Activated CD8-positive, alpha-beta T cell treated with anti-CD3 and anti-CD28 coated beads for 36 hours (primary cell): ENCODE measurements at regions of chr9 and their contacts with region 1.

Region 1: GRCh38 chr9:20622330-20623020 is at the start of gene MLLT3:
- DNase-seq: peak; percentile 97
- ATAC-seq: peak; percentile 87
- H3K4me3 Mint-ChIP-seq: peak within 1 kb of the TSS; percentile 97
- H3K27ac Mint-ChIP-seq: peak within 1 kb of the TSS; percentile 99
- H3K4me1 Mint-ChIP-seq: peaks cover 37% of the 10 kb centered on the region
- H3K27me3 Mint-ChIP-seq: no peaks in the 10 kb centered on the region
- CTCF ChIP-seq: no peak
- total RNA-seq, gene MLLT3: 59.1 to 60.8 TPM

Region 2: GRCh38 chr9:19925817-19926503 is 696.5 kb before region 1 on chr9:
- CTCF ChIA-PET with region 1: interaction called, 3 read pairs
- POLR2A ChIA-PET with region 1: interaction called, 3 read pairs
- intact Hi-C with region 1: loop called (anchors 5 kb)
- DNase-seq: peak; percentile 84
- ATAC-seq: peak; percentile 99
- H3K4me3 Mint-ChIP-seq: peak overlapping the region; percentile 58
- H3K27ac Mint-ChIP-seq: no peak overlapping the region
- H3K4me1 Mint-ChIP-seq: peaks cover 10% of the 10 kb centered on the region
- H3K27me3 Mint-ChIP-seq: peaks cover 13% of the 10 kb centered on the region
- CTCF ChIP-seq: peak; percentile 95

Region 3: DNA sequence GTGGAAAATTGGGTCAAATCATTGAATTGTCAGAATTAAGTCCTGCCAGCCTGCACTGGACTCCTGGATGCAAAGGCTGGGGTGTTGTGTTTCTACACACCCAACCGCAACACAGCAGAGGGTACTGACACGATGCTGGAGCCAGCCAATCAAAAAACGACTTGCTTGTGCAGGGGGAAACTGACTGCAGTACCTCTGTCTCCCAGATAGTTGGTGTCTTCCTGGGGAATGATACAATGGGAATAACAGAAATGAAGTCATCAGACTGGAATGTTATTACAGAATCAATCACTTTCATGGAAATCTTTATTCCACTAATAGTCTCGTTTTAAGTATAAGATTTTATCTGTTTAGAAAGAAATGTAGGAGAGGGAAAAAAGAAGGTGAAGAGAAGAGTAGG is 330.5 kb before region 1 on chr9:
- CTCF ChIA-PET with region 1: no interaction called
- POLR2A ChIA-PET with region 1: no interaction called
- intact Hi-C with region 1: no loop called
- DNase-seq: no peak
- ATAC-seq: no peak
- H3K4me3 Mint-ChIP-seq: no peak overlapping the region
- H3K27ac Mint-ChIP-seq: no peak overlapping the region
- H3K4me1 Mint-ChIP-seq: no peaks in the 10 kb centered on the region
- H3K27me3 Mint-ChIP-seq: no peaks in the 10 kb centered on the region
- CTCF ChIP-seq: no peak

Region 4: DNA sequence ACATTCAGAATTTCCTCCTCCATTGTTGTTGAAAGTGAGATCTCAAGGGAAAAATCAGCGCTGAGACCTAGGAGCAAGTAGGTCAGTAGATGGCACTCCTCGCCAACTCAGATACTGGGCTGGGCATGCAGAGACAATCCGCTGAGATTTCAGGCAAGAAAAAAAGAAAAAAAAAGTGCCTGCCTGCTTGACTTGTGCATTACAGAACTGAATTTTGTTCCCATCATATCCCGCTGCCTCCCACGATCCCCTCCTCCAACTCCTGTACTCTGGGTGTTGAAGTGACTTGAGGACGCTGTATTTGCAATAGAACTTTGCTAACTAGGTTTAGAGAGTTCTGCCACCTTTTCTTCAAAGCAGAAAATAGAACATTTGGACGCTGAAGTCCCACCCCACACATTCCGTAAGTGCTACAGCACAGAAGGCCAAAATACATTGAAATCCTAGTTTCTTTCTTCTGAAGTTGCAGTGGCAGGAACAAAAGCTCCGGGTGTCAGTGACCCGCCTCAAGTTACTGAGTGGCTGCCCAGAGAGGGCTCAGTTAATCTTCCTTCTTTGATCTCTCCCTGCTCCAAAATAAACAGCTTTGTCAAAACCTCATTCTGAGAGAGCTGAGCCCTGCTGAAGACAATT is 266.0 kb before region 1 on chr9:
- CTCF ChIA-PET with region 1: interaction called, 14 read pairs
- POLR2A ChIA-PET with region 1: interaction called, 4 read pairs
- intact Hi-C with region 1: loop called (anchors 2 kb)
- DNase-seq: peak; percentile 72
- ATAC-seq: peak; percentile 50
- H3K4me3 Mint-ChIP-seq: no peak overlapping the region
- H3K27ac Mint-ChIP-seq: no peak overlapping the region
- H3K4me1 Mint-ChIP-seq: peaks cover 68% of the 10 kb centered on the region
- H3K27me3 Mint-ChIP-seq: no peaks in the 10 kb centered on the region
- CTCF ChIP-seq: peak; percentile 53

Region 5: DNA sequence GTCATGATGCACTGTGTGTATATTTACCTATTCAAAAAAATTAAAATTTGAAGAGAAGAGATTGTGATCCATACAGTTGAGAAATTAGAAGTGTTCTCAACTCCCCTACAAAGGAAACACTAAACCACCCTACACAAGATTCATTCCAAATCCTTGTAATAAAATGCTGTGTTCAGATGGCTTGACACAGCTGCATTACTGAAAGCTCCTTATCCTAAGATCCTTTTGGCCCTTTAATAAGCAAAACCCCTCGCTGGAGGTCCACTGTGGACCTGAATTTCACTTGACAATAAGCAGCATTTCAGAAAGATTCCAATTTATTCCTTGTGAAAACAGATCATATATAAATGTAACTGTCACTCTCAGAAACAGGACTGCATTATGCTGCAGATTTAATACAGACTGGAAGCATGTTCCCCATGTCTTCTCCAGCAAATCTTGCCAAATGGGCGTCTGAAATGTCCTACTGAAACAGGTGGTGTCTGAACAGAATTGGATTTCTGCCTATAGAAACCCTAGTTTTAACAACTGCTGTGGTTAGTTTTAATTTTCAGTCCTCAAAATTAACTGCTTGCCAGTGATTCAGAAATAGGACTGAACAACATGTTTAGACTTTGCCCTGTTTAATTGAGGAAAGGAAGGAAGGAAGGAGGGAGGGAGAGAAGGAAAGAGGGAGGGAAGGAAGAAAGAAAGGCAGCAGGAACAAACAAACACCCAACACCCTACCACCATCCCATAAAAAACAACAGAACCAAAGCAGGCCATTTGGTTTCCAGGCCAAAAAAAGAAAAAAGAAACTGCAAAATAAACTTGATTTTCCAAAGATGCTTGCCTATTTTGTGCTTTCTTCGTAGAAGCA is 179.8 kb before region 1 on chr9:
- CTCF ChIA-PET with region 1: no interaction called
- POLR2A ChIA-PET with region 1: no interaction called
- intact Hi-C with region 1: no loop called
- DNase-seq: no peak
- ATAC-seq: no peak
- H3K4me3 Mint-ChIP-seq: no peak overlapping the region
- H3K27ac Mint-ChIP-seq: no peak overlapping the region
- H3K4me1 Mint-ChIP-seq: peaks cover 53% of the 10 kb centered on the region
- H3K27me3 Mint-ChIP-seq: no peaks in the 10 kb centered on the region
- CTCF ChIP-seq: no peak

Region 6: DNA sequence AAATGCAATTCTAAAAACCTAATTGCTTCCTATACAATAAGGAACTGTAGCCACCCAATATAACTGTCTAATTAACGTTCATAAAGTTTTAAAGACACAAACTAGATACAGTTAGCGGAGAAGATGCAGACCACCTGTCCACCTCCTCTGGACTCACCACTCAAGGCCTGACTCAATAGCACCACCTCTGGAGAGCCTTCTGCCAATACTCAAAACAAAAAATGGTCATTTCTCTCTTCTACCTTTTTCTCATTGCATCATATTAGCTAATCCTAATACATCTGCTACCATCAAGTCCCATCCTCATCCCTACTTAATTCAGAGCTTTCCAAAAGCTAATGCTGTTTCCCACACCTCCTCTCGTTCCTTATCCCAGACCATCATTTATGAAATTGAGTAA is 160.1 kb before region 1 on chr9:
- CTCF ChIA-PET with region 1: no interaction called
- POLR2A ChIA-PET with region 1: no interaction called
- intact Hi-C with region 1: no loop called
- DNase-seq: no peak
- ATAC-seq: no peak
- H3K4me3 Mint-ChIP-seq: no peak overlapping the region
- H3K27ac Mint-ChIP-seq: no peak overlapping the region
- H3K4me1 Mint-ChIP-seq: peaks cover 63% of the 10 kb centered on the region
- H3K27me3 Mint-ChIP-seq: no peaks in the 10 kb centered on the region
- CTCF ChIP-seq: no peak

Region 7: GRCh38 chr9:20552874-20553575 is 69.5 kb before region 1 on chr9:
- CTCF ChIA-PET with region 1: interaction called, 4 read pairs
- POLR2A ChIA-PET with region 1: interaction called, 13 read pairs
- intact Hi-C with region 1: loop called (anchors 5 kb)
- DNase-seq: peak; percentile 12
- ATAC-seq: peak; percentile 69
- H3K4me3 Mint-ChIP-seq: peak overlapping the region; percentile 11
- H3K27ac Mint-ChIP-seq: peak overlapping the region; percentile 69
- H3K4me1 Mint-ChIP-seq: peaks cover 72% of the 10 kb centered on the region
- H3K27me3 Mint-ChIP-seq: no peaks in the 10 kb centered on the region
- CTCF ChIP-seq: peak; percentile 44

Region 8: DNA sequence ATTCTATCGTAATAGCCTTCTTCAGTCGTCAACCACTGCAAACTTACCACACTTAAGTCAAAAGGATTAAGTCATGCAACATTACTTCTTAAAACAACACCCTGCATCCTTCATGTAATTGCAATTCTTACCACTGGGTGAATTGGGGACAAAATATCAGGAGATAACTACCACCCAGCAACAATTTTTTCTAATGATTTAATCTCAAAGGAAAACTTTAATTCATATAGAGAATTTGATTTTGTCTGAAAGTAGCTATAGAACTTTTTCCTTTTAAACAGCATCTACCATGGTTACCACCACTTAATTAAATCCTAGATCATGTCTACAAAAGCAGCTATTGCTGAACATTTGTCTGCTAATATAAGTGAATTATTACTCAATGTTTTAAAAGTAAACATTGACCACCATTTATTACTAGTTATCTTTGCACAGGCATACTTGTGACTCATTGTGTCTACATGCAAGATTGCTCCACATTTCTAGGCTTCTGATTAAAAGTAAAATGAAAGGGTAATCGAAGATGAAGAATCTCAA is 10.7 kb before region 1 on chr9:
- CTCF ChIA-PET with region 1: interaction called, 11 read pairs
- POLR2A ChIA-PET with region 1: interaction called, 17 read pairs
- intact Hi-C with region 1: no loop called
- DNase-seq: no peak
- ATAC-seq: peak; percentile 61
- H3K4me3 Mint-ChIP-seq: no peak overlapping the region
- H3K27ac Mint-ChIP-seq: no peak overlapping the region
- H3K4me1 Mint-ChIP-seq: peaks cover 70% of the 10 kb centered on the region
- H3K27me3 Mint-ChIP-seq: no peaks in the 10 kb centered on the region
- CTCF ChIP-seq: peak; percentile 60

Region 9: DNA sequence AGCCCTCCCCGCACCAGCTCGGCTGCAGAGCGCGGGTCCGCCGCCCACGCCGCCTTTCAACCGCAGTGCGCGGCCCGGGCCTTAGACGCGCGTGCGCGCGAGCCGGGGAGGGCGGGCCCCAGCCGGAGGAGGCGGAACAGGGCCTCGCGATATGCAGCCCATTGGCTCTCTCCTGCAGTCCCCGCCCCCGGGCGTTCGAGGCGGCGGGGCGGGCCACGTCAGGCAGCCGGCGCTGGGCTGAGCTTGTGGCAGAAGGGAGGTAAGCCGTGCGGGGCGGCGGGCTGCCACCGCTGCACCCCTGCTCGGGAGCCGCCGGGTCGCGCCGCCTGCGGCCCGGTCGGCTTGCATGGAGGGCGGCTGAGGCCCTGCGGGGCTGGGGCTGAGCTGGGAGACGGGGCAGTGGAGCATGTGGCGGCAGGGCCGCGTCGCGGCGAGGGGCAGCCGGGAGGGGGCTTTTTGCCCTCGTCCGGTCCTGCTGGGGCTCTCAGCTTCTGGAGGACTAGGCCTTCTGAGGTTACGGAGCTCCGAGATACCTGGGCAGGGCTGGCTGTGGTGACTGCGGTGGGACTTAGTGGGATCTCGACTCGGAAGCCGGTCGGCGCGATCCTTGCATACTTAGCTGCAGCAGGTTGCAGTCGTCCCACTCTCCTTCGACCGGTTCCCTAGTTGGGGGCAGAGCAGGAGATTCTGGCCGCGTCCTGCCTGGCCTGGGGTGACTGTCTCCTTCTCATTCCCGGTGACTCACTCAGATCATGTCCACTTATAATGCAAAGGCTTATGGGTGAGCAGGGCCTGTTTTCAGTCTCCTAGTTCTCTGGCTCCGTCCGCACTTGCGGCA is 61.8 kb after region 1 on chr9 and contains the start of gene FOCAD:
- CTCF ChIA-PET with region 1: interaction called, 16 read pairs
- POLR2A ChIA-PET with region 1: interaction called, 19 read pairs
- intact Hi-C with region 1: loop called (anchors 5 kb)
- DNase-seq: peak; percentile 95
- ATAC-seq: peak; percentile 99
- H3K4me3 Mint-ChIP-seq: peak within 1 kb of the TSS; percentile 92
- H3K27ac Mint-ChIP-seq: peak within 1 kb of the TSS; percentile 81
- H3K4me1 Mint-ChIP-seq: peaks cover 18% of the 10 kb centered on the region
- H3K27me3 Mint-ChIP-seq: no peaks in the 10 kb centered on the region
- CTCF ChIP-seq: no peak
- total RNA-seq, gene FOCAD: 37.3 to 42.8 TPM

Region 10: GRCh38 chr9:20941174-20941690 is 318.8 kb after region 1 on chr9:
- CTCF ChIA-PET with region 1: interaction called, 69 read pairs
- POLR2A ChIA-PET with region 1: interaction called, 3 read pairs
- intact Hi-C with region 1: loop called (anchors 1 kb)
- DNase-seq: peak; percentile 66
- ATAC-seq: peak; percentile 96
- H3K4me3 Mint-ChIP-seq: no peak overlapping the region
- H3K27ac Mint-ChIP-seq: no peak overlapping the region
- H3K4me1 Mint-ChIP-seq: peaks cover 4% of the 10 kb centered on the region
- H3K27me3 Mint-ChIP-seq: no peaks in the 10 kb centered on the region
- CTCF ChIP-seq: peak; percentile 87